ENCODE measurements at regions of chr3 and their contacts with region 1.

Region 1: GRCh38 chr3:141452036-141452435 is 34.8 kb upstream of the RASA2 start:
- DNase-seq: no peak
- ATAC-seq: peak; percentile 53 to 82 (median 75)
- H3K4me3 ChIP-seq: no peak overlapping the region
- H3K27ac ChIP-seq: peak overlapping the region in 6 of 10 donors; percentile 9 to 59 (median 22)
- H3K4me1 ChIP-seq: peaks cover 3 to 69% (median 35%) of the 10 kb centered on the region in 9 donors
- H3K27me3 ChIP-seq: no peaks in the 10 kb centered on the region
- CTCF ChIP-seq: peak; percentile 60 to 91 (median 75)

Region 2: DNA sequence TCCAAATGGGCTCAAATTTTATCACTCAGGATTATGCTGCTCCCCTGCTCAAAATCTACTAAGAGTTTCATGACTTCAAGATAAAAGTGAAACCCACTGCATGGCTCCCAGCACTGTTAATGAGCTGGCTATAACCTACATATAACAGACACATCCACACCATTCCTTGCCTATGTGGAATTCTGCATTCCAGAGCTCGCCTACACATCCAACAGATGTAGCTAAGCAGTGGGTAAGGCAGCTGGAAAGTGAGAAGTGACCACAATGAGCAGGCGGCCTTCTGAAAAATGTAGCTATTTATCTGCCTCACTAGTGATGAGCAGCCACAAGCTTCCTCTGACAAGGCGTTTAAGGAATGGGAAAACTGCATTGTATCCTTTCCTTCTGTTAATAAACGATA is 866.2 kb before region 1 on chr3:
- intact Hi-C with region 1: no loop called
- DNase-seq: no peak
- ATAC-seq: no peak
- H3K4me3 ChIP-seq: no peak overlapping the region
- H3K27ac ChIP-seq: no peak overlapping the region
- H3K4me1 ChIP-seq: no peaks in the 10 kb centered on the region
- H3K27me3 ChIP-seq: peaks cover 0 to 6% (median 0%) of the 10 kb centered on the region in 7 donors
- CTCF ChIP-seq: no peak

Region 3: GRCh38 chr3:141303481-141304223 is 148.4 kb before region 1 on chr3:
- intact Hi-C with region 1: loop called in 3 of 10 experiments (anchors 2 to 5 kb)
- DNase-seq: peak in 1 of 2 donors; percentile 76
- ATAC-seq: peak; percentile 39 to 90 (median 71)
- H3K4me3 ChIP-seq: no peak overlapping the region
- H3K27ac ChIP-seq: peak overlapping the region in 3 of 10 donors; percentile 3 to 51 (median 38)
- H3K4me1 ChIP-seq: peaks cover 0 to 27% (median 10%) of the 10 kb centered on the region in 9 donors
- H3K27me3 ChIP-seq: no peaks in the 10 kb centered on the region
- CTCF ChIP-seq: peak; percentile 79 to 88 (median 82)

Region 4: GRCh38 chr3:141336672-141337522 is 115.1 kb before region 1 on chr3:
- intact Hi-C with region 1: no loop called
- DNase-seq: no peak
- ATAC-seq: peak in 1 of 8 donors; percentile 29
- H3K4me3 ChIP-seq: no peak overlapping the region
- H3K27ac ChIP-seq: peak overlapping the region in 1 of 10 donors; percentile 1
- H3K4me1 ChIP-seq: peaks cover 0 to 31% (median 9%) of the 10 kb centered on the region in 9 donors
- H3K27me3 ChIP-seq: no peaks in the 10 kb centered on the region
- CTCF ChIP-seq: no peak

Region 5: GRCh38 chr3:141353652-141354495 is 98.2 kb before region 1 on chr3:
- intact Hi-C with region 1: loop called in 1 of 10 experiments (anchors 5 kb)
- DNase-seq: no peak
- ATAC-seq: peak in 4 of 8 donors; percentile 27 to 88 (median 66)
- H3K4me3 ChIP-seq: no peak overlapping the region
- H3K27ac ChIP-seq: no peak overlapping the region
- H3K4me1 ChIP-seq: no peaks in the 10 kb centered on the region
- H3K27me3 ChIP-seq: no peaks in the 10 kb centered on the region
- CTCF ChIP-seq: no peak

Region 6: GRCh38 chr3:141368062-141368924 is 83.7 kb before region 1 on chr3 and contains the start of gene ZBTB38:
- intact Hi-C with region 1: loop called in 3 of 10 experiments (anchors 1 to 5 kb)
- DNase-seq: peak; percentile 90 to 91
- ATAC-seq: peak; percentile 91 to 97 (median 96)
- H3K4me3 ChIP-seq: peak within 1 kb of the TSS; percentile 8 to 52 (median 42)
- H3K27ac ChIP-seq: peak within 1 kb of the TSS; percentile 86 to 96 (median 91)
- H3K4me1 ChIP-seq: peaks cover 7 to 61% (median 45%) of the 10 kb centered on the region in 9 donors
- H3K27me3 ChIP-seq: no peaks in the 10 kb centered on the region
- CTCF ChIP-seq: peak in 1 of 9 donors; percentile 5
- total RNA-seq, gene ZBTB38: 86.8 to 156 (median 139) TPM

Region 7: GRCh38 chr3:141498598-141499223 is 46.7 kb after region 1 on chr3:
- intact Hi-C with region 1: no loop called
- DNase-seq: peak in 1 of 2 donors; percentile 37
- ATAC-seq: peak; percentile 28 to 87 (median 70)
- H3K4me3 ChIP-seq: peak overlapping the region in 1 of 10 donors; percentile 36
- H3K27ac ChIP-seq: peak overlapping the region in 5 of 10 donors; percentile 0 to 87 (median 16)
- H3K4me1 ChIP-seq: peaks cover 0 to 47% (median 12%) of the 10 kb centered on the region in 9 donors
- H3K27me3 ChIP-seq: no peaks in the 10 kb centered on the region
- CTCF ChIP-seq: no peak